H1 (cell line): ENCODE measurements at regions of chr11 and their contacts with region 1.

Region 1: DNA sequence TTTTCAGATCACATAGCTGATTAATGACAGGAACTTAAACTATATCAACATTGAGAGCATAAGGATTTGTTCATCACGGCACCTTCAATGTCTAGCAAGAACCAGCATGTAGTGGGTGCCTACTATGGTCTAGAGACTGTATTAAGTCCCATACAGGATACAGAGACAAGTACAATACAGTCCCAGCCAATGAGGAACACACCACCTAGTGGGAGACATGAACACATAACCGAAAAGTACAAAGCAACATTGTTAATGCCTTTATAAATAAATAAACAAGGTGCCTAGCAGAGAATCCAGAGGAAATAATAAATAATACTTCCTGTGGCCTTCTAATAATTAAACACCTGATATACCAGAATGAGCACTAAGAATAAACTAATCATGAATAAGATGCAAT is 87.7 kb upstream of the OPCML start:
- DNase-seq: peak in 1 of 2 experiments; percentile 23
- H3K4me3 ChIP-seq: no peak overlapping the region
- H3K27ac ChIP-seq: no peak overlapping the region
- H3K4me1 ChIP-seq: peaks cover 0 to 5% (median 0%) of the 10 kb centered on the region in 4 experiments; a peak in 1 of 7 replicates
- H3K27me3 ChIP-seq: no peaks in the 10 kb centered on the region
- CTCF ChIP-seq: peak in 2 of 3 experiments; percentile 15 to 20; a peak in 2 of 4 replicates
- EP300 ChIP-seq: no peak
- POLR2A ChIP-seq: no peak
- RAD21 ChIP-seq: peak; percentile 27 to 50; a peak in 3 of 4 replicates

Region 2: GRCh38 chr11:133600786-133601185 is 19.2 kb before region 1 on chr11:
- CTCF ChIA-PET with region 1: interaction called, 39 read pairs
- POLR2A ChIA-PET with region 1: no interaction called
- DNase-seq: no peak
- H3K4me3 ChIP-seq: no peak overlapping the region
- H3K27ac ChIP-seq: no peak overlapping the region
- H3K4me1 ChIP-seq: peaks cover 1 to 10% (median 5%) of the 10 kb centered on the region in 4 experiments; a peak in 5 of 7 replicates
- H3K27me3 ChIP-seq: no peaks in the 10 kb centered on the region
- CTCF ChIP-seq: no peak
- EP300 ChIP-seq: no peak
- POLR2A ChIP-seq: no peak
- RAD21 ChIP-seq: no peak

Region 3: DNA sequence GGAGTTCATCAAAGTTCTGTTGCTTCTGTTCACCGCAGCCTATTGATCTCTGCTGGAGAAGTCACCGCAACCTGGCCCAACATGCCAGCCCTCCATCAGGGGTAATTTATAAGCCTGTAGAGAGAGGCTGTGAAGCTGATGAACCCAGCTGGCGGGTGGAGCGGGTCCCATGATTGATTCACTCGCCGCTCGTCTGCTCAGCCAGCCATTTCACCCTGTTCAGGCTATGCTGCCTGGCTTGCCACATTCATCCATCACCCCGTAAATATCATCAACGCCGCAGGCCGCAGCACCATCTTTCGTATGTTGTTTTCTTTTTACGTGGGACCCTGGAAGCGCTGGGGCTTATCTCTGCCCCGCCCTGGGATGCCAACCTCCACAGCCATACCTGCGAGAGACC is 29.1 kb after region 1 on chr11:
- CTCF ChIA-PET with region 1: interaction called, 14 read pairs
- POLR2A ChIA-PET with region 1: no interaction called
- DNase-seq: peak in 1 of 2 experiments; percentile 11
- H3K4me3 ChIP-seq: no peak overlapping the region
- H3K27ac ChIP-seq: no peak overlapping the region
- H3K4me1 ChIP-seq: no peaks in the 10 kb centered on the region; a peak in 1 of 7 replicates
- H3K27me3 ChIP-seq: no peaks in the 10 kb centered on the region
- CTCF ChIP-seq: no peak
- EP300 ChIP-seq: no peak
- POLR2A ChIP-seq: no peak
- RAD21 ChIP-seq: no peak

Region 4: DNA sequence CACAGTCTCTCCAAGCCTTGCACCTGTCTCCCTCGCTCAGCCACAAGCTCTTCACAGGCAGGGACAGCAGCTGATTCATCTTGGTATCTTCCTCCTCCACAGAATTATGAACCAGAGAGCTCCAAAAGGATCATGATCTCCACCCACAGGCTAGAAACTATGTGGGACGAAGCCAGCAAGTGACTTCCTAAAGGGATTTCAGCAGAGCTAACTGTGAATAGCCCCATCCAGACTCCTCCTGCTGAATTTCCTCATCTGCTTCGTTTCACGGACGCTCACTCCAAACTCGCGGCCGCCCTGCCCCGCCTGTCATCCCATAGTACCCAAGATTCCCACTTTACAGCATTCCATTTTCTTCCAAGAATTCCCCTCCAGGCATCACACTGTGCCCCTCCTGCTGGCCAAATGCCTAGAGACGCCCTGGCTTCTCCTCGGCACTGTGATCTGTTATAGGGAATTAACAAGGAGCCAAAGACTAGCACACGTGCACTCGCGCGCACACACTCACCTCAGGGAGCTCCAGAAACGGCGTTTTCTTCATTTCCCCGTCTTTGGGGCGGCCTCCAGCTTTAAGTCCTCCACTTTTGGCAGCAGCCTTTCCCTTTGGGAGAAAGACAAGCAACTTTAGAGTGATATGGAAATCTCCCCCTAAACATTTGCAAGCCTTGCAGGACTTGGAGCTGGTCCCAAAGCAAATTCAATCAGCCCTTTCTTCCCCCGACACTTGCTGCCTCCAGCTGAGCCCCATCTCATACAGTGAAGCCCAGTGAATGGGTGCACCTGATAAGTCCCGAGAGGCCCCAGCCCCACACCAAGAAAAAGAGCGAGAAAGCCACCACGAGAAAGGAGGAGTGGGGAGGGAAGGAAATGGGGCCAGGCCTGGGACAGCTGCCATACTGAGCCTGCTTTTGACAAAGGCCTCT is 189.9 kb after region 1 on chr11:
- CTCF ChIA-PET with region 1: interaction called, 18 read pairs
- POLR2A ChIA-PET with region 1: no interaction called
- DNase-seq: no peak
- H3K4me3 ChIP-seq: no peak overlapping the region
- H3K27ac ChIP-seq: no peak overlapping the region
- H3K4me1 ChIP-seq: peaks cover 2 to 14% (median 12%) of the 10 kb centered on the region in 4 experiments; a peak in 6 of 7 replicates
- H3K27me3 ChIP-seq: no peaks in the 10 kb centered on the region; a peak in 1 of 7 replicates
- CTCF ChIP-seq: peak in 1 of 3 experiments; percentile 14; a peak in 1 of 4 replicates
- EP300 ChIP-seq: no peak
- POLR2A ChIP-seq: no peak
- RAD21 ChIP-seq: 0 out of 4 replicates have a peak, but pooled peaks of 1 of the 2 experiments have one; percentile 14

Region 5: DNA sequence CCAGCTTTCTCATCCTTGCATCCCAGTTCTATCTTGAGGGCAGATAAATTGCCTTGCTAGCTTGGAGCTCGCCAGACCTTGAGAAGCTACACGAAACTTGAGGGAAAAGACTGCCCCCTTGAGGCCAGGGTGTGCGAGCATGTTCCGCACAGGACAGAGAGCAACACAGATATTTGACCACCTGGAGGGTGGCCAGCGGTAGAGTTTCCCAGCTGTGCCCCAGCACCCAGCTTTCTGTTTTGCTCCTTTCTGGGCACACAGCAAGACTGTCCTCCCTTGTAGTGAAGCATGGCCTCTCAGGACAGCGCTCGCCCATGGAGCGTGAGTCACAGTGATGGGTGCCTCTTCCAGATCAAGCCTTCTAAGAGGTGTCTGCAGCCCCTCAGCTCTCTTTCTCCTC is 201.8 kb after region 1 on chr11:
- CTCF ChIA-PET with region 1: interaction called, 31 read pairs
- POLR2A ChIA-PET with region 1: no interaction called
- DNase-seq: peak; percentile 66 to 81
- H3K4me3 ChIP-seq: no peak overlapping the region
- H3K27ac ChIP-seq: no peak overlapping the region
- H3K4me1 ChIP-seq: peaks cover 0 to 2% (median 0%) of the 10 kb centered on the region in 4 experiments; a peak in 1 of 7 replicates
- H3K27me3 ChIP-seq: no peaks in the 10 kb centered on the region; a peak in 1 of 7 replicates
- CTCF ChIP-seq: peak; percentile 84 to 95 (median 90)
- EP300 ChIP-seq: no peak
- POLR2A ChIP-seq: no peak
- RAD21 ChIP-seq: peak; percentile 94 to 95

Region 6: GRCh38 chr11:133860151-133860550 is 240.2 kb after region 1 on chr11:
- CTCF ChIA-PET with region 1: no interaction called
- POLR2A ChIA-PET with region 1: no interaction called
- DNase-seq: no peak
- H3K4me3 ChIP-seq: no peak overlapping the region
- H3K27ac ChIP-seq: no peak overlapping the region
- H3K4me1 ChIP-seq: peaks cover 0 to under 1% (median 0%) of the 10 kb centered on the region in 4 experiments; a peak in 1 of 7 replicates
- H3K27me3 ChIP-seq: no peaks in the 10 kb centered on the region
- CTCF ChIP-seq: no peak
- EP300 ChIP-seq: no peak
- POLR2A ChIP-seq: no peak
- RAD21 ChIP-seq: no peak